Motor neuron (in vitro differentiated cells): ENCODE measurements at regions of chr10 and their contacts with region 1.

Region 1: GRCh38 chr10:102927311-102928010 is 9.4 kb downstream of the CNNM2 start:
- ATAC-seq: no peak
- H3K4me3 ChIP-seq: no peak overlapping the region
- H3K27ac ChIP-seq: no peak overlapping the region
- H3K4me1 ChIP-seq: peaks cover 0 to under 1% of the 10 kb centered on the region in 2 donors

Region 2: GRCh38 chr10:103053659-103054581 is 126.5 kb after region 1 on chr10:
- in situ Hi-C with region 1: loop called in 1 of 9 experiments (anchors 10 kb)
- ATAC-seq: peak in 7 of 8 experiments; percentile 95 to 99 (median 98)
- H3K4me3 ChIP-seq: no peak overlapping the region
- H3K27ac ChIP-seq: no peak overlapping the region
- H3K4me1 ChIP-seq: peaks cover 0 to 3% of the 10 kb centered on the region in 2 donors